Activated T-helper 1 cell treated with anti-CD3 and anti-CD28 coated beads, Interleukin-12 subunit alpha, Interleukin-12 subunit beta, Interleukin-2, Interleukin-4 antibody, amounts not matched to agents 30 ng/mL and 10 ng/mL and 1 ng/mL, durations not matched to agents 14 hours and 24 hours and 36 hours (primary cell): ENCODE measurements at regions of chr16 and their contacts with region 1.

Region 1: DNA sequence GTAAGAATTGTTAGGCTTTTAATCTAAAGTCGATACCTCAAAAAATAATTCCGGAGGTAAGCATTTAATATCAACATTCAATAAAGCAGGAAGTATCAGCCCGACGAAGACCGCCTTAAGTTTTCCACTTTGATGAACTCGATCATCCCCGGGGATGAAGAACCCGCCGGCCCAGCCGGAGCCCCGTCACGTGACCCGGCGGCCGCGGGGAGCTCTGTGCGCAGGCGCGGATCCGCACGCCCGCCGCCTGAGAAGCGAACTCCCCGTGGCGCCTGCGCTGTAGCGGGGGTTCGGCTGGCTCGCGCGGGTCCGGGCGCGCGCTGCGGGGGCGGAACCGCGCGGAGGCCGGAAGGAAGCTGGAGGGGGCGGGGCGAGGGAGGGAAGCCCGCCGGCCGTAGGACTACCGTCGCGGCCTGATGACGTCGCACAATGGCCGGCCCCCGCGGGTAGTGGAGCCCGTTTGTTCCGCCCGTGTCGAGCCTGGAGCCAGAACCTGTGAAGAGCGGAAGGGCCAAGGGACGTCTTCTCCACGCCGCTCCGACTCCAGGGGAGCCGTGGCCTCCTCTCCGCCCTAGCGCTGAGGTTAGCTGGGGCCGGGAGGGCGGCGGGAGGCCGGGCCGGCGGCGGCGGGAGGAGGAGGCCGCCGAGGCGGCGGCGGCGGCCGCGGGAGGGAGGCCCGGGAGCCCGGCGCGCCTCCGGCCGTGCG is at the start of gene ZC3H18:
- DNase-seq: peak; percentile 96
- H3K4me3 Mint-ChIP-seq: peak within 1 kb of the TSS; percentile 92
- H3K27ac Mint-ChIP-seq: peak within 1 kb of the TSS; percentile 86
- H3K4me1 Mint-ChIP-seq: peaks cover 40% of the 10 kb centered on the region
- H3K27me3 Mint-ChIP-seq: no peaks in the 10 kb centered on the region
- total RNA-seq, gene ZC3H18: 115 and 116 TPM in 2 replicates

Region 2: GRCh38 chr16:87950765-87951549 is 619.2 kb before region 1 on chr16 and contains the start of gene BANP:
- intact Hi-C with region 1: loop called (anchors 1 kb)
- DNase-seq: peak; percentile 95
- H3K4me3 Mint-ChIP-seq: peak within 1 kb of the TSS; percentile 94
- H3K27ac Mint-ChIP-seq: peak within 1 kb of the TSS; percentile 94
- H3K4me1 Mint-ChIP-seq: peaks cover 49% of the 10 kb centered on the region
- H3K27me3 Mint-ChIP-seq: no peaks in the 10 kb centered on the region
- total RNA-seq, gene BANP: 35.4 and 35.5 TPM in 2 replicates

Region 3: DNA sequence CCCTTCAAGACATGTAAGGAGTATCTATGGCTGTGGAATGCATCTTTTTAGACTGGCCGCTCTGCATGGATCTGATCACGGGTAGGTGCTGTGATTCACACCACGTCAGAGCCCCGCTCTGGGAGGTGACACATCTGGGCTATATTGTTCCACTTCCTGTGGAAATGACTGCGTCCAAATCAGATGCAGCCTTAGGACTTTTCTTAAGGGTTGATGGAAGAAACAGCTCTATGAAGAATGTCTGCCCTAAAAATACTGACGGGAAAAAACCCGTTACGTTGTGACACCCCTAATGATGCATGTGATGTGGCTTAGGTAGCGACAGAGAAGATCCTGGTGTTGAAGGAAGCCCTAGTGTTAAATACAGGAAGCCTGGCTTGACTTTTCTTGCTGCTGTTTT is 606.7 kb before region 1 on chr16:
- intact Hi-C with region 1: loop called (anchors 5 kb)
- DNase-seq: peak; percentile 47
- H3K4me3 Mint-ChIP-seq: peak overlapping the region; percentile 37
- H3K27ac Mint-ChIP-seq: peak overlapping the region; percentile 92
- H3K4me1 Mint-ChIP-seq: peaks cover 47% of the 10 kb centered on the region
- H3K27me3 Mint-ChIP-seq: no peaks in the 10 kb centered on the region

Region 4: GRCh38 chr16:88533932-88534732 is 36.0 kb before region 1 on chr16:
- intact Hi-C with region 1: loop called (anchors 1 kb)
- DNase-seq: peak; percentile 79
- H3K4me3 Mint-ChIP-seq: no peak overlapping the region
- H3K27ac Mint-ChIP-seq: no peak overlapping the region
- H3K4me1 Mint-ChIP-seq: no peaks in the 10 kb centered on the region
- H3K27me3 Mint-ChIP-seq: no peaks in the 10 kb centered on the region

Region 5: GRCh38 chr16:88650749-88651275 is 80.7 kb after region 1 on chr16 and contains the start of gene CYBA:
- intact Hi-C with region 1: loop called (anchors 1 kb)
- DNase-seq: peak; percentile 88
- H3K4me3 Mint-ChIP-seq: peak within 1 kb of the TSS; percentile 88
- H3K27ac Mint-ChIP-seq: peak within 1 kb of the TSS; percentile 96
- H3K4me1 Mint-ChIP-seq: peaks cover 13% of the 10 kb centered on the region
- H3K27me3 Mint-ChIP-seq: no peaks in the 10 kb centered on the region
- total RNA-seq, gene CYBA: 218 and 219 TPM in 2 replicates

Region 6: GRCh38 chr16:88706288-88706964 is 136.3 kb after region 1 on chr16 and contains the starts of genes CTU2 and RNF166:
- intact Hi-C with region 1: loop called (anchors 1 kb)
- DNase-seq: peak; percentile 92
- H3K4me3 Mint-ChIP-seq: peak within 1 kb of the TSS; percentile 89
- H3K27ac Mint-ChIP-seq: peak within 1 kb of the TSS; percentile 86
- H3K4me1 Mint-ChIP-seq: peaks cover 47% of the 10 kb centered on the region
- H3K27me3 Mint-ChIP-seq: no peaks in the 10 kb centered on the region
- total RNA-seq, gene CTU2: 66.3 and 74.7 TPM in 2 replicates
- total RNA-seq, gene RNF166: 42.4 and 45.0 TPM in 2 replicates